ENCODE measurements at regions of chr9 and their contacts with region 1.

Region 1: DNA sequence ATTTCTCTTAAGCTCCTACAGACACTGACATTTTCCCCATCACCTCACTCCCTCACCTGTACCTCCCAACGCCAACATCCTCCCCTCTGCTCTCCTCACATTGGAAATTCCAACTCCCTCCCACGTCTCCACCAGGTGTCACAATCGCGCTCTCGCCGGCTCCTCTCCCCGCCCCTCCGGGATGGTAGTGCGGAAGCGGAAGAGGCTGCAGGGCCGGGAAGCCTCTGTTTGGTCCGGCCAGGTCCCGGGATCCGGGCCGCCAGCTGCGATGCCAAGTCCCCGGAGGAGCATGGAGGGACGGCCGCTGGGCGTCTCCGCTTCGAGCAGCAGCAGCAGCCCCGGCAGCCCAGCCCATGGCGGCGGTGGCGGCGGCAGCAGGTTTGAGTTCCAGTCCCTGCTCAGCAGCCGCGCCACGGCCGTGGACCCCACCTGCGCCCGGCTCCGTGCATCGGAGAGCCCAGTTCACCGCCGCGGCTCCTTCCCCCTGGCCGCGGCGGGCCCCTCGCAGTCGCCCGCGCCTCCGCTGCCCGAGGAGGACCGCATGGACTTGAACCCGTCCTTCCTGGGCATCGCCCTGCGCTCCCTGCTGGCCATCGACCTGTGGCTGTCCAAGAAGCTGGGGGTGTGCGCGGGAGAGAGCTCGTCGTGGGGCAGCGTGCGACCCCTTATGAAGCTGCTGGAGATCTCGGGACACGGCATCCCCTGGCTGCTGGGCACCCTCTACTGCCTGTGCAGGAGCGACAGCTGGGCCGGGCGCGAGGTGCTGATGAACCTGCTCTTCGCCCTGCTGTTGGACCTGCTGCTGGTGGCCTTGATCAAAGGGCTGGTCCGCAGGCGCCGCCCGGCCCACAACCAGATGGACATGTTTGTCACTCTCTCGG is at the start of gene PLPP6:
- DNase-seq: peak; percentile 77

Region 2: DNA sequence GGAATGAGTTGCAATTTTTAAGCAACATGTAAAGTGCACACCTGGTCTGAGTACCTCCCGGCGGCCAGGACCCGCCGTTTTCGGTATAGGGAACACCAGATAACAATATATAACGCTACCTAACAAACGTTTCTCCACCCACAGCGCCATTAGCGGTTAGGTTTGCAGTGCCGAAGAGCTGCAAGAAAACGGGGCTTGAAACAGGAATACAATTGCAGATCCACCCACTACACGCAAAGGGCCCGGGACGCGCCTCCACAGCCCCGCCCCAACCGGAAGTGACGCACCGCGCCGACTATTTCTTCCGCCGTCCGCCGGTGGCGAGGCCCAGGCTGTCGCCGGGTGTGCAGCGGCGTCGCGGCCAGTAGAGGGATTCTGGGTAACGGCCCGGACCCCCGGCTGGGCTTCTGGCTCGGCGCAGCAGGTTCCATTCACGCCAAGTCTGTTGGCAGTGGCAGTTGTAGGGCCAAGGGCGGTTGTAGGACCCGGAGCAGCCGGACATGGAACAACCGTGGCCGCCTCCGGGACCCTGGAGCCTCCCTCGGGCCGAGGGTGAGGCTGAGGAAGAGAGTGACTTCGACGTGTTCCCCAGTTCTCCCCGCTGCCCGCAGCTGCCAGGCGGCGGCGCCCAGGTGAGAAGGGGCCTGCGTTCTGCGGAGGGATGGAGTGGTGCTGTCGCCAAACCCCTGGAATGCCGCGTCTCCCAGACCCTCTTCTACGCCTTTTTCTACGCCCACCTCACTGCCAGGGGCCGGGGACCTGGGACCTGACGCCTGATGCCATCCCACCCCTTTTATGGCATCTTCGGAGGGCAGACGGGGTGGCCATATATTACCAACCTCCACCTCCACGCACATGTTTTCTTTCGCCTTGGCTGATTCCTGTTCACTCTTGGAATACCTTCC is 17.2 kb after region 1 on chr9 and contains the start of gene CDC37L1:
- CTCF ChIA-PET with region 1: interaction called, 3 read pairs
- POLR2A ChIA-PET with region 1: interaction called, 14 read pairs
- DNase-seq: peak; percentile 90

Region 3: GRCh38 chr9:4740638-4741364 is 78.5 kb after region 1 on chr9 and contains the start of gene AK3:
- CTCF ChIA-PET with region 1: interaction called, 3 read pairs
- POLR2A ChIA-PET with region 1: interaction called, 10 read pairs
- DNase-seq: peak; percentile 78